Endothelial cell of umbilical vein (primary cell): ENCODE measurements at regions of chrX and their contacts with region 1.

Region 1: GRCh38 chrX:34365482-34365881 is 233.4 kb upstream of the FAM47A start:
- DNase-seq: peak; percentile 65
- H3K4me3 ChIP-seq: no peak overlapping the region
- H3K27ac ChIP-seq: no peak overlapping the region
- H3K4me1 ChIP-seq: no peaks in the 10 kb centered on the region
- H3K27me3 ChIP-seq: no peaks in the 10 kb centered on the region
- CTCF ChIP-seq: peak; percentile 35
- POLR2A ChIP-seq: no peak

Region 2: GRCh38 chrX:33252306-33252825 is 1113.1 kb before region 1 on chrX:
- CTCF ChIA-PET with region 1: no interaction called
- POLR2A ChIA-PET with region 1: no interaction called
- dilution Hi-C with region 1: no loop called
- intact Hi-C with region 1: no loop called
- DNase-seq: no peak
- H3K4me3 ChIP-seq: no peak overlapping the region
- H3K27ac ChIP-seq: no peak overlapping the region
- H3K4me1 ChIP-seq: no peaks in the 10 kb centered on the region
- H3K27me3 ChIP-seq: no peaks in the 10 kb centered on the region
- CTCF ChIP-seq: no peak
- POLR2A ChIP-seq: no peak

Region 3: GRCh38 chrX:34126011-34126410 is 239.5 kb before region 1 on chrX:
- CTCF ChIA-PET with region 1: no interaction called
- POLR2A ChIA-PET with region 1: no interaction called
- dilution Hi-C with region 1: no loop called
- intact Hi-C with region 1: no loop called
- DNase-seq: no peak
- H3K4me3 ChIP-seq: no peak overlapping the region
- H3K27ac ChIP-seq: no peak overlapping the region
- H3K4me1 ChIP-seq: no peaks in the 10 kb centered on the region
- H3K27me3 ChIP-seq: no peaks in the 10 kb centered on the region
- CTCF ChIP-seq: no peak
- POLR2A ChIP-seq: no peak

Region 4: GRCh38 chrX:34382416-34382815 is 16.9 kb after region 1 on chrX:
- CTCF ChIA-PET with region 1: no interaction called
- POLR2A ChIA-PET with region 1: no interaction called
- dilution Hi-C with region 1: no loop called
- intact Hi-C with region 1: no loop called
- DNase-seq: peak; percentile 72
- H3K4me3 ChIP-seq: no peak overlapping the region
- H3K27ac ChIP-seq: peak overlapping the region; percentile 24
- H3K4me1 ChIP-seq: no peaks in the 10 kb centered on the region
- H3K27me3 ChIP-seq: no peaks in the 10 kb centered on the region
- CTCF ChIP-seq: no peak
- POLR2A ChIP-seq: no peak

Region 5: GRCh38 chrX:34521563-34521962 is 156.1 kb after region 1 on chrX:
- CTCF ChIA-PET with region 1: interaction called, 12 read pairs
- POLR2A ChIA-PET with region 1: no interaction called
- dilution Hi-C with region 1: no loop called
- intact Hi-C with region 1: no loop called
- DNase-seq: peak; percentile 51
- H3K4me3 ChIP-seq: no peak overlapping the region
- H3K27ac ChIP-seq: no peak overlapping the region
- H3K4me1 ChIP-seq: no peaks in the 10 kb centered on the region
- H3K27me3 ChIP-seq: no peaks in the 10 kb centered on the region
- CTCF ChIP-seq: peak in 1 of 2 donors; percentile 8
- POLR2A ChIP-seq: no peak